Panc1 (cell line): ENCODE measurements at regions of chr17 and their contacts with region 1.

Region 1: GRCh38 chr17:14080847-14081251 is 11.5 kb downstream of the COX10 start:
- DNase-seq: no peak
- ATAC-seq: no peak
- H3K4me3 ChIP-seq: no peak overlapping the region
- H3K27ac ChIP-seq: no peak overlapping the region
- H3K4me1 ChIP-seq: no peaks in the 10 kb centered on the region
- H3K27me3 ChIP-seq: no peaks in the 10 kb centered on the region
- CTCF ChIP-seq: no peak

Region 2: GRCh38 chr17:13490906-13491482 is 589.9 kb before region 1 on chr17:
- CTCF ChIA-PET with region 1: no interaction called
- POLR2A ChIA-PET with region 1: interaction called, 10 read pairs
- in situ Hi-C with region 1: no loop called
- intact Hi-C with region 1: no loop called
- DNase-seq: no peak
- ATAC-seq: no peak
- H3K4me3 ChIP-seq: no peak overlapping the region
- H3K27ac ChIP-seq: no peak overlapping the region
- H3K4me1 ChIP-seq: no peaks in the 10 kb centered on the region
- H3K27me3 ChIP-seq: no peaks in the 10 kb centered on the region
- CTCF ChIP-seq: no peak

Region 3: DNA sequence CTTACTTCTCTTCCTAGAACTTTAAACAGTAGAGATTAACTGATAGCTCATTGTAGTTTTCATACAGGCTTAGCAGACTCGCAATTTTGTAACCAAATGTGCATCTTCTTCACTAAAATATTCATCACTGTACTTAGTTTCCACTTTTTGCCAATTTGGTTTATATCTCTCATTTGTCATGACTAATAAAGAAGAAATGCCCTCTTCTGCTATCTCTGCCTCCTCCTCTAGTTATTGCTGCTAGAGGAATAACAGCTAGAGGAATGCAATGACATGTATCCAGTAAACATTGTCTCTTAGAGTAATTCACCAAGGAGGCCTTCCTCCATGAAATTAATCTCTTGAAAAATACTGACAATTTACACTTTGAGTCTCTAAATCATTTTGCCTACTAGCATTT is 127.0 kb before region 1 on chr17:
- CTCF ChIA-PET with region 1: no interaction called
- POLR2A ChIA-PET with region 1: interaction called, 17 read pairs
- in situ Hi-C with region 1: no loop called
- intact Hi-C with region 1: no loop called
- DNase-seq: no peak
- ATAC-seq: no peak
- H3K4me3 ChIP-seq: no peak overlapping the region
- H3K27ac ChIP-seq: no peak overlapping the region
- H3K4me1 ChIP-seq: no peaks in the 10 kb centered on the region
- H3K27me3 ChIP-seq: no peaks in the 10 kb centered on the region
- CTCF ChIP-seq: no peak